GM12878 (cell line): ENCODE measurements at regions of chr12 and their contacts with region 1.

Region 1: DNA sequence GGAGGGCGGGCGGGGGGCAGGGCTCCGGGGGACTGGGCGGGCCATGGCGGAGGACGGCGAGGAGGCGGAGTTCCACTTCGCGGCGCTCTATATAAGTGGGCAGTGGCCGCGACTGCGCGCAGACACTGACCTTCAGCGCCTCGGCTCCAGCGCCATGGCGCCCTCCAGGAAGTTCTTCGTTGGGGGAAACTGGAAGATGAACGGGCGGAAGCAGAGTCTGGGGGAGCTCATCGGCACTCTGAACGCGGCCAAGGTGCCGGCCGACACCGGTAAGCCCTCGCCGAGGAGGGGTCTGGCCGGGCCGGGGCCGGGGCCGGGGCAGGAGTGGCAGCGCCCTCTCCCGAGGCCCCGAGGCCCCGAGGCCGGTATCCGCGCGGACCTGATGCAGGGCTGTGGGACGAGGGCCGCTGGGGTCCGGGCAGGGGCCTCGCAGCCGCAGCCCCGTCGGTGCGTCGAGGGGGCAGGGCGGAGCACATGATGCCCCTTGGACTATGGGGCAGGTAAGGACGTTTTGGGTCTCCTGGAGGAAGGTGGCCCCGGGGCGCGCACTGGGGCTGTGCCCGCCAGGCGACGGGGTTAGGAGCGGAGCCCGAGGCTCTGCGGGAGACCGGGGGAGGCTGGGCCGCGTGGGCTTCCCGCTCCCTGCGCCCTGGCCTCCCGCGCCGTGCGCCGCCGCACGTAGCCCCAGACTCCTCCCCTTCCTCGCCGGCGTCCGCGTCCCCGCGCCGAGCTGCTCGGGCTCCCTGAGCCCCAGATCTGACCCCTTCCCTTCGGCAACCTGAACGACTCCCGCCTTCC is at the start of gene TPI1:
- DNase-seq: peak; percentile 23
- ATAC-seq: peak; percentile 86
- H3K4me3 ChIP-seq: peak within 1 kb of the TSS; percentile 100
- H3K27ac ChIP-seq: peak within 1 kb of the TSS; percentile 96
- H3K4me1 ChIP-seq: peaks cover 32% of the 10 kb centered on the region
- H3K27me3 ChIP-seq: no peaks in the 10 kb centered on the region
- CTCF ChIP-seq: no peak
- EP300 ChIP-seq: no peak
- POLR2A ChIP-seq: peak; percentile 88
- RAD21 ChIP-seq: no peak
- polyA plus RNA-seq, gene TPI1: 5,044 to 7,349 TPM

Region 2: DNA sequence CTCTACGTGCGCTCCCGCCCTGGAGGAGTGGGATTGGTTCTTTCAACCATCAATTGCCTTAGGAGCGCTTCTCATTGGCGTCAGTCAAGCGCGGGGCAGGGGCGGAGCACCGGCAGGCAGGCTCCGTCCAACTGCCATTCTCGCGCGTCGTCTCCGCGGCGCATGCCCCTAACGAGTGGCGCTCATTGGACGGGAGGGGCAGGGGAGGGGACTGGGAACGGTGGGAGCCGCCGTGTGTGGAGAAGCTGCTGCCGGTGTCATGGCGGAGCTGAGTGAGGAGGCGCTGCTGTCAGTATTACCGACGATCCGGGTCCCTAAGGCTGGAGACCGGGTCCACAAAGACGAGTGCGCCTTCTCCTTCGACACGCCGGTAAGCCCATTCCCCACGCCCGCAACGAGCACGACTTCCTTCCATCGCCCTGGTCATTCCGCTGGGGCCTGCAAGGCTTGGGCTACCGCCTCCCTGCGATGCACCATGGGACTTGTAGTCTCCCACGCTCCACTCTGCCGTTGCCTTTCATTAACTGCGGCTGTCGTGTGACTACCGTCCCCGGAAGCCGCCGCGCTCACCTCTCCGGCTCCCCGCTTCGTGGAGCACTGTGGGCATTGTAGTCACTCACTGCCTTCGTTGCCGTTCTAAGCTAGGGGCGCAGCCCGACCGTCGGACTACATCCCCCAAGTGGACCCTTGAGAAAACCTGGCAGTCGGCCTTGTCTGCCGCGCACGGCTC is 15.5 kb before region 1 on chr12 and contains the start of gene USP5:
- CTCF ChIA-PET with region 1: interaction called, 173 read pairs
- POLR2A ChIA-PET with region 1: interaction called, 84 read pairs
- RAD21 ChIA-PET with region 1: interaction called, 42 read pairs
- SMC1A ChIA-PET with region 1: interaction called, 42 read pairs
- in situ Hi-C with region 1: no loop called
- intact Hi-C with region 1: no loop called
- DNase-seq: peak; percentile 99
- ATAC-seq: peak; percentile 87
- H3K4me3 ChIP-seq: peak within 1 kb of the TSS; percentile 82
- H3K27ac ChIP-seq: peak within 1 kb of the TSS; percentile 84
- H3K4me1 ChIP-seq: peaks cover 28% of the 10 kb centered on the region
- H3K27me3 ChIP-seq: no peaks in the 10 kb centered on the region
- CTCF ChIP-seq: no peak
- EP300 ChIP-seq: no peak
- POLR2A ChIP-seq: peak; percentile 89
- RAD21 ChIP-seq: no peak
- polyA plus RNA-seq, gene USP5: 2.5 to 5.2 TPM

Region 3: GRCh38 chr12:6890789-6891645 is 23.4 kb after region 1 on chr12:
- CTCF ChIA-PET with region 1: interaction called, 121 read pairs
- POLR2A ChIA-PET with region 1: interaction called, 30 read pairs
- RAD21 ChIA-PET with region 1: interaction called, 37 read pairs
- SMC1A ChIA-PET with region 1: interaction called, 41 read pairs
- in situ Hi-C with region 1: no loop called
- intact Hi-C with region 1: loop called (anchors 1 kb)
- DNase-seq: peak; percentile 86
- ATAC-seq: peak; percentile 98
- H3K4me3 ChIP-seq: peak overlapping the region; percentile 64
- H3K27ac ChIP-seq: peak overlapping the region; percentile 97
- H3K4me1 ChIP-seq: peaks cover 12% of the 10 kb centered on the region
- H3K27me3 ChIP-seq: no peaks in the 10 kb centered on the region
- CTCF ChIP-seq: peak; percentile 71 to 96 (median 80); a peak in 5 of 6 replicates
- EP300 ChIP-seq: 0 out of 4 replicates have a peak, but pooled peaks of 1 of the 2 experiments have one; percentile 8
- POLR2A ChIP-seq: peak; percentile 72
- RAD21 ChIP-seq: 0 out of 2 replicates have a peak, but pooled peaks have one; percentile 26

Region 4: DNA sequence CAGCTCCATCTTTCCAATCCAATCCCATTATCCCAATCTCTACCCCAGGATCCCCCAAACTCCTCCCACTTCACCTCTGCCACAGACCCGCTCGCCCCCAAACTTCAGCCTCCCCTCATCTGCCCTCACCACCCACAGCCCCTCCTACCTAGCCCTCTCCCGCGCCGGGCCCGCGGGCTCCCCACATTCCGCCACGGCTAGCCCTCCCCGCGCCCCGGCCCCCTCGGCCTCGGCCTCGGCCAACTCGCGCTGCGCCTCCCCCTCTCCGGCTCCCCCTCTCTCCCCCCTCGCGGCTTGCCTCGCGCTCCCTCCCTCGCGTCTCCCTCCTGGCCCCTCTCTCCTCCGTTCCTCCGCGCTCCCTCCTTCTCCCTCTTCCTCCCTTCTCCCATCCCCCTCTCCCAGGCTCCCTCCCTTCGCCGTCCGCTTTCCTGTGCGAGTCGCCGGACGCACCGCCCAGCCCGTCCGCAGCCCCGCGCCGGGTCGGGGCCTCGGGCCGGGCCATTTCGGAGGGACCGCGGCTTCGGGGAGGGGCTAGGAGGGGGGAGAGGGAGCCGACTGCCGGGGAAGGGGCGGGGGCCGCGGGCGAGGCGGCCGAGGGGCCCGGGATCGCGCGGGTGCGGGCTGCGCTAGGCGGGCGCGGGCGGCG is 59.9 kb after region 1 on chr12 and contains the start of gene ATN1:
- CTCF ChIA-PET with region 1: interaction called, 22 read pairs
- POLR2A ChIA-PET with region 1: interaction called, 4 read pairs
- RAD21 ChIA-PET with region 1: interaction called, 4 read pairs
- SMC1A ChIA-PET with region 1: interaction called, 6 read pairs
- in situ Hi-C with region 1: no loop called
- intact Hi-C with region 1: loop called (anchors 2 kb)
- DNase-seq: no peak
- ATAC-seq: peak; percentile 43
- H3K4me3 ChIP-seq: peak within 1 kb of the TSS; percentile 95
- H3K27ac ChIP-seq: peak within 1 kb of the TSS; percentile 86
- H3K4me1 ChIP-seq: peaks cover 37% of the 10 kb centered on the region
- H3K27me3 ChIP-seq: no peaks in the 10 kb centered on the region
- CTCF ChIP-seq: no peak
- EP300 ChIP-seq: no peak
- POLR2A ChIP-seq: peak; percentile 79
- RAD21 ChIP-seq: no peak
- polyA plus RNA-seq, gene ATN1: 0.08 to 0.15 TPM

Region 5: DNA sequence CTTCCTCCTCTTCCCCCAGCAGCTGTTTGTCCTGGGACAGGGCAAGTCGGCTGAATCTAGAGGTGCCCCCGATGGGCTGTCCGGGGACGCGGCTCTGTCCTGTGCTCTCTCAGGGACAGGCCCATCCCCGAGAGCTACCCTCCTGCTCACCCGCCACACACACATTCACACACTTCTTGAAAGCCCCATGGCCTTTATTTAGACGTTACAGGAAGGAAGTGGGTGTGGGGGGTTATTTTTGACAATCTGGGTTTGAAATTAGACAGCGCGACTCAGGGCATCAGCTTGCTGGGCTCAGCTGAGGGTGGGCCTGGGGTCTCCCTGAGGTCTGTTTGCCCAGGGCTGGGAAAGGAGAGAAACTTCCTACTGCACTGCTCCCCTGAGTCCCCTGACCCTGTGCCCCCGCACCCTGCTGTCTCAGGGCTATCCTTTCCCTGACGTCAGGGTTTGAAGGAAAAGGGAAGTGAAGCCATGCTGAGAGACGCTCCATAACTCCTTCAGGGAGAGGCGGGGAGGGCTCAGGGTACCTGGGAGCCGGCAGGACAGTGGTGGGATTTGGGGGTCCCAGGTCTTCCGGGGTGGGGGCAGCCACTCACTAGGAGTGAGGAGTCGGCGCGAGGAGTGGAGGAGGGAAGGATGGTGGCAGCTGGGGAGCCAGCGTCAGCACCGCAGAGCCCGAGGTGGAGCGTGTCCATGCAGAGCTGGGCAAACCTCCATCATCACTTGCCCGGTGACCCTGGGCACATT is 91.6 kb after region 1 on chr12:
- CTCF ChIA-PET with region 1: interaction called, 12 read pairs
- POLR2A ChIA-PET with region 1: no interaction called
- RAD21 ChIA-PET with region 1: interaction called, 6 read pairs
- SMC1A ChIA-PET with region 1: interaction called, 3 read pairs
- in situ Hi-C with region 1: no loop called
- intact Hi-C with region 1: loop called (anchors 1 kb)
- DNase-seq: no peak
- ATAC-seq: peak; percentile 66
- H3K4me3 ChIP-seq: peak overlapping the region; percentile 95
- H3K27ac ChIP-seq: peak overlapping the region; percentile 99
- H3K4me1 ChIP-seq: peaks cover 82% of the 10 kb centered on the region
- H3K27me3 ChIP-seq: no peaks in the 10 kb centered on the region
- CTCF ChIP-seq: no peak
- EP300 ChIP-seq: peak; percentile 73 to 80; a peak in 3 of 4 replicates
- POLR2A ChIP-seq: no peak
- RAD21 ChIP-seq: peak; percentile 15; the same call in 1 of the 2 replicates

Region 6: DNA sequence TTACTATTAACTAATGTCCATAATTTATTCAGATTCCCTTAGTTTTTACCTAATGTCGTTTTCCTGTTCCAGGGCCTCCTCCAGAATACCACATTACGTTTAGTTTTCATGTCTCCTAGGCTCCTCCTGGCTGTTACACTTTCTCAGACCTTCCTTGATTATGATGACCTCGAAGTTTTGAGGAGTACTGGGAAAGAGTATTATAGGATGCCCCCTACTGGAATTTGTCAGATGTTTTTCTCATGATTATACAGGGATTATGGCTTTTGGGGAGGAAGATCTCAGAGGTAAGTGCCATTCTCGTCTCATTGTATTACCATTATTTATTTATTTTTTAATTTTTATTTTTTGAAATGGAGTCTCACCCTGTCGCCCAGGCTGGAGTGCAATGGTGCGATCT is 175.2 kb after region 1 on chr12:
- CTCF ChIA-PET with region 1: no interaction called
- POLR2A ChIA-PET with region 1: no interaction called
- RAD21 ChIA-PET with region 1: no interaction called
- SMC1A ChIA-PET with region 1: no interaction called
- in situ Hi-C with region 1: no loop called
- intact Hi-C with region 1: no loop called
- DNase-seq: no peak
- ATAC-seq: peak; percentile 41; the same call in 1 of the 3 replicates
- H3K4me3 ChIP-seq: no peak overlapping the region
- H3K27ac ChIP-seq: no peak overlapping the region
- H3K4me1 ChIP-seq: no peaks in the 10 kb centered on the region; the same call in 1 of the 2 replicates
- H3K27me3 ChIP-seq: no peaks in the 10 kb centered on the region
- CTCF ChIP-seq: 0 out of 6 replicates have a peak, but pooled peaks of 1 of the 3 experiments have one; percentile 18
- EP300 ChIP-seq: no peak
- POLR2A ChIP-seq: no peak
- RAD21 ChIP-seq: 0 out of 2 replicates have a peak, but pooled peaks have one; percentile 29